ENCODE measurements at regions of chr3 and their contacts with region 1.

Region 1: DNA sequence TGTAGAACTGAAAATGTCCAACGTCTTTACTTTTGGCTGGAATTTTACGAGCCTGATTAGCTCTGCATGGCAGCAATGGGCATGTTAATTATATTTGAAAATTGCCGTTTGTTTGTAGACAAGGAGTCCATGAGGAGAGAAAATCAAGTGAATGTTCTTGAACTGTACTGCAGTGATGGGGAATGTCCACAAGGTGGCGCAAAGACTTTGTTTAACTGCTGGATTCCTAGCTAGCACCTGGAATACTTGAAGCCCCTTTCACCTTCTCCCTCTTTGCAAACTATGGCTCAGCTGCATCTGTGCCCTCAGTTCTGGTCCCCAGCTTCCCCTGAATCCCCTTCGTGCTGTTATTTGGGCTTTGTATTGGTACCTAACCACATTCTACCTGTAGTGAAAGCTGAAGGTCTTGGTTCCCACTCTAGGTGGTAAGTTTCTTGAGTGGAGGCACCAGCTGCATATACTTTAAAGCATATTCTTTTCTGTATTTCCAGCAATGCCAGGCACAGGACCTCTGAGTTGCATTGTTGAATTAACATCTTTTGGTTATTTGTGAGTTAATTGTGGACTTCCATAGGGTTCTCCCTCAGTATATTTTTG is 25.3 kb downstream of the EXOG start:
- ATAC-seq: peak; percentile 15 to 63 (median 39)
- H3K4me3 ChIP-seq: no peak overlapping the region
- H3K27ac ChIP-seq: no peak overlapping the region
- H3K4me1 ChIP-seq: no peaks in the 10 kb centered on the region

Region 2: GRCh38 chr3:38651154-38651789 is 129.8 kb after region 1 on chr3:
- in situ Hi-C with region 1: loop called in 6 of 9 experiments (anchors 10 to 25 kb)
- ATAC-seq: peak in 7 of 8 experiments; percentile 18 to 57 (median 40)
- H3K4me3 ChIP-seq: no peak overlapping the region
- H3K27ac ChIP-seq: no peak overlapping the region
- H3K4me1 ChIP-seq: no peaks in the 10 kb centered on the region

Region 3: GRCh38 chr3:38992117-38992760 is 470.8 kb after region 1 on chr3:
- in situ Hi-C with region 1: loop called in 1 of 9 experiments (anchors 25 kb)
- ATAC-seq: peak in 3 of 8 experiments; percentile 54 to 88 (median 86)
- H3K4me3 ChIP-seq: no peak overlapping the region
- H3K27ac ChIP-seq: no peak overlapping the region
- H3K4me1 ChIP-seq: no peaks in the 10 kb centered on the region

Region 4: GRCh38 chr3:39000008-39000450 is 478.5 kb after region 1 on chr3:
- in situ Hi-C with region 1: loop called in 4 of 9 experiments (anchors 25 kb)
- ATAC-seq: peak in 7 of 8 experiments; percentile 13 to 100 (median 72)
- H3K4me3 ChIP-seq: no peak overlapping the region
- H3K27ac ChIP-seq: no peak overlapping the region
- H3K4me1 ChIP-seq: no peaks in the 10 kb centered on the region